Right ventricle myocardium inferior (tissue), 1 donor: ENCODE measurements at regions of chr3 and their contacts with region 1.

Region 1: GRCh38 chr3:155449613-155450267 is 156.3 kb upstream of the STRIT1 start:
- DNase-seq: no peak
- ATAC-seq: peak; percentile 95

Region 2: DNA sequence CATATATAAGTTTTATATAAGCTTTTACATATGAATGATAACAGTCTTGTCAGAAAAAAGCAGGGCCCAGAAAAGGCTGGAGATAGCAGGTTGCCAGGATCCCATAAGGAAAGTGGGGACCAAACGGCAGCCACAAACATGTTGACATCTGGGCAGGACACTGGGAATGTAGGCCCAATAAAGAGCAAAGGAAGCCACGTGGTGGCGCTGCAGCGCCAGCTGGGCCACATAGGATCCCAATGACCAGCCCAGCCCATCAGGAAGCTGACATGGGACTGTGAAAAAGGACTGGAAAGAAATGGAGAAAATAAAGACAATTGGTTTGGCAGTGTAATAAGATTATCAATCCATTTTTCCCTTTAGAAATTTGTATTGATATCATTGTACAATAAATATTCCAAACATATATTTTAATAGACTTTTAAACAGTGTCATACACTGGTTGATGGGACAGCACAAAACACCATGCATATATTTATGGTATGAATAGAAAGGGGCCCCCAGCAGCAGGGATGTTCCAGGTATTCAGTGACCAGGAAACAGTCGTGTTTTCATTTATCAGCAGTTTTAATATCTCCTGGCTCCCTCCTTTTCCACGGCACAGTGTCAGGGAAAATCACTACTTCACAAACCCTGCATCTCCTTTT is 67.2 kb before region 1 on chr3:
- intact Hi-C with region 1: loop called (anchors 5 kb)
- DNase-seq: peak; percentile 85
- ATAC-seq: peak; percentile 78

Region 3: DNA sequence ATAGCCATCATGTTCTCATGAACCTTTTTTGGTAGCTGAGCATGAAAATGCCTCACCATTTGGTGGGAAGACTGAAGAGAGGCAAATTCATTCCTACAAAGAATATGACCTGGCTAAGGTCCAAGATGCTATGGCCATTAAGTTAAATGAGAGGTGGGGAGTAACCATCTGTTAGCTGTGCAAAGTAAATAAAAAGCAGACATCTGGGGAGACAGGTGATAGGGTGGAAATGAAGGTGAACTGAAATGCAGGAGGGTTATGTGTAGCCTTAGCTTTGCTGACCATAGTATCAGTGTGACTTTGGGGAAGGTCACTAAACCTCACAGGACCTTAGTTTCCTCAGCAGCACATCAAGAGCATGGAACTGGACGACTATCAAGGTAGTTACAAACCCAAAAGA is 45.3 kb before region 1 on chr3:
- intact Hi-C with region 1: no loop called
- DNase-seq: no peak
- ATAC-seq: no peak